ENCODE measurements at regions of chr6 and their contacts with region 1.

Region 1: GRCh38 chr6:127302728-127303660 is 36.3 kb downstream of the RNF146 start:
- DNase-seq: peak; percentile 47
- H3K4me3 ChIP-seq: no peak overlapping the region
- H3K27ac ChIP-seq: peak overlapping the region in 3 of 4 donors; percentile 34 to 65 (median 65)
- H3K4me1 ChIP-seq: peaks cover 0 to 40% (median 12%) of the 10 kb centered on the region in 4 donors
- H3K27me3 ChIP-seq: no peaks in the 10 kb centered on the region
- CTCF ChIP-seq: peak; percentile 69 to 74 (median 70)
- EP300 ChIP-seq: no peak
- POLR2A ChIP-seq: no peak

Region 2: GRCh38 chr6:126312013-126312663 is 990.9 kb before region 1 on chr6:
- in situ Hi-C with region 1: no loop called
- intact Hi-C with region 1: no loop called
- DNase-seq: no peak
- H3K4me3 ChIP-seq: no peak overlapping the region
- H3K27ac ChIP-seq: no peak overlapping the region
- H3K4me1 ChIP-seq: no peaks in the 10 kb centered on the region
- H3K27me3 ChIP-seq: no peaks in the 10 kb centered on the region
- CTCF ChIP-seq: peak in 4 of 5 experiments; percentile 37 to 47 (median 42)
- EP300 ChIP-seq: no peak
- POLR2A ChIP-seq: no peak

Region 3: DNA sequence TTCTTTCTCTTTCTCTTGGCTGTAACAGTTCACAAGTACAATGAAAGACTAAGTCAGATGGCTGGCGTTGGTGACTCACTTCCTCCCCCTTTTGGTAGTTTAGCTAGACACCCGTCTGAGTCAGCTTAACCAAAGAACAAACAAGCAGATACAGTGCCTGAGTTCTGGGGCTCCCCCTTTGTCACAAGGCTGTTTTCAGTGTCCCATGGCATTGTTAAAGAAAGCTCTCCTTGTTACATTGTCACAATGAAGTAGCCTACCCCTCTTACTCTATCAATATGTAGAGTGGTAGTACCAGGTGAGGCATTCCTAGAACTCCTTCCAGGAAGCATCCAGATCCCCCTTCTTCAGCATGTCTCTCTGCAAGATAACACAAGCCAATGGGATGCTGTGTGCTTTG is 117.6 kb after region 1 on chr6:
- in situ Hi-C with region 1: loop called in 1 of 4 experiments (anchors 25 kb)
- intact Hi-C with region 1: no loop called
- DNase-seq: peak; percentile 64
- H3K4me3 ChIP-seq: no peak overlapping the region
- H3K27ac ChIP-seq: peak overlapping the region in 1 of 4 donors; percentile 3
- H3K4me1 ChIP-seq: peaks cover 0 to 8% (median 4%) of the 10 kb centered on the region in 4 donors
- H3K27me3 ChIP-seq: no peaks in the 10 kb centered on the region
- CTCF ChIP-seq: peak; percentile 40 to 51 (median 50)
- EP300 ChIP-seq: no peak
- POLR2A ChIP-seq: no peak

Region 4: DNA sequence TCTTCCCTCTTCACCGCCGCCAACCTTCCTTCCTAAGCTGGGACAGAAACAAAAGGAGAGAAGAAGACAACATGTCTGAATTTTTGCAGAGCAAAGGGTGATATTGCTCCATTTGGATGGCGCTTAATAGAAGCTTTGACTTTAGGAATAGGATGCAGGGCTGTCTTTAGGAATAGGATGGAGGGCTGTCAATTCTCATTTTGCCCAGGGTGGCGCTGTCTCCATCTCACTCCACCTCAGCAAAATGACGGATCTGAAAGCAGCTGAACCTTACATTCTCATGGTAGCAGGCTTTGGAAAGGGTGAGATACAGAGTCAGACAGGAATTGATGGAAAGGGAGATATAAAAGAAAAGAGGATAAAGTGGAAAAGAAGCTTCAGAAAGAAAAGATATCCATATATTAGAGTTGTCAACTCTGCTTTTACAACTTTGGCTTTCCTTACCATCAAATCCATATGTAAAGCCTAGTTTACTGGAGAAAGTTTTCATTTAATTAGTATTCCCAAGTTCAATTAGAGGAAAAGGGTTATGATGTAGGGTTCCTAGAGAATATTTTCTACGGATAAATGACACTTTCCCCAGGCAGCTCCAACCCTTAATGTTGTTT is 213.8 kb after region 1 on chr6:
- in situ Hi-C with region 1: no loop called
- intact Hi-C with region 1: loop called (anchors 5 kb)
- DNase-seq: peak; percentile 20
- H3K4me3 ChIP-seq: peak overlapping the region; percentile 46 to 76 (median 50)
- H3K27ac ChIP-seq: peak overlapping the region in 1 of 4 donors; percentile 32
- H3K4me1 ChIP-seq: peaks cover 5 to 40% (median 22%) of the 10 kb centered on the region in 4 donors
- H3K27me3 ChIP-seq: peaks cover 87% of the 10 kb centered on the region
- CTCF ChIP-seq: peak; percentile 48 to 61 (median 57)
- EP300 ChIP-seq: no peak
- POLR2A ChIP-seq: no peak

Region 5: DNA sequence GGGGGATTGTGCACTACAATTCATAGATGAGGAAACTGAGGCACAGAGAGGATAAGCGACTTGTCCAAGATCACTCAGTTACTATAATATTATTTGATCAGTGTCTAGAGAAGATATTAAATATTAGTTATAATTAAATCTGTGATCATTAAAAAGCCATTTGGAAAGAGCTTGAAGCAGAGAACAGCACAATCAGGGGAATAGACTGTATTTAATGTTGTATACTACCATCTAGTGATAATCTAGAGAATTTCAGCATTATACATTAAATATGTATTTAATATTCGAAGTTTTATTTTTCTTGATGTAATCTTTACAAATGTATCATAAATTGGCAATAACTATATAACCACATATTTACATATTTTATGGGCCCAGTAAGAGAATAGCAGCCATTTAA is 236.3 kb after region 1 on chr6:
- in situ Hi-C with region 1: loop called in 1 of 4 experiments (anchors 10 kb)
- intact Hi-C with region 1: loop called (anchors 5 kb)
- DNase-seq: no peak
- H3K4me3 ChIP-seq: no peak overlapping the region
- H3K27ac ChIP-seq: no peak overlapping the region
- H3K4me1 ChIP-seq: no peaks in the 10 kb centered on the region
- H3K27me3 ChIP-seq: no peaks in the 10 kb centered on the region
- CTCF ChIP-seq: peak; percentile 35 to 43 (median 37)
- EP300 ChIP-seq: no peak
- POLR2A ChIP-seq: no peak

Region 6: DNA sequence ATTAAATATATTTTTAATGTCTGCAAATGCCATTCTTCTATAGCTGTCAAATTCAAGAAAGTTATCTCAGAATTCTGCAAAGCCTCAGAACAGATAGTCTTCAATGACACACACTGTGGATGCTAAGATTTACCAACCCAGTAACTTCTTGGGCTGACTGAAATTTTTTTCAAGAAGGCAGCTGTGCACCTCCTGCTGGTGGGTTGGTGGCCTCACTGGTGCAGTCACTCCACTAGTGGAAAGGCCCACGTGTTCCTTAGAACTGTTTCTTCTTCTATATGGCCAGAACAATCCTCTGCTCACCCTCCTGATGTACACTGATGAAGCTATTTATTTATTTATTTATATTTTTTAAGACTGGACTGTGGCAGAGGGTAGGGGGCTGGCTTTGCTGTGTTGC is 244.2 kb after region 1 on chr6:
- in situ Hi-C with region 1: loop called in 1 of 4 experiments (anchors 10 kb)
- intact Hi-C with region 1: no loop called
- DNase-seq: no peak
- H3K4me3 ChIP-seq: no peak overlapping the region
- H3K27ac ChIP-seq: no peak overlapping the region
- H3K4me1 ChIP-seq: no peaks in the 10 kb centered on the region
- H3K27me3 ChIP-seq: peaks cover 3% of the 10 kb centered on the region
- CTCF ChIP-seq: no peak
- EP300 ChIP-seq: no peak
- POLR2A ChIP-seq: no peak

Measured in transverse colon (tissue), 4 donors.